Caco-2 (cell line): ENCODE measurements at regions of chr22 and their contacts with region 1.

Region 1: DNA sequence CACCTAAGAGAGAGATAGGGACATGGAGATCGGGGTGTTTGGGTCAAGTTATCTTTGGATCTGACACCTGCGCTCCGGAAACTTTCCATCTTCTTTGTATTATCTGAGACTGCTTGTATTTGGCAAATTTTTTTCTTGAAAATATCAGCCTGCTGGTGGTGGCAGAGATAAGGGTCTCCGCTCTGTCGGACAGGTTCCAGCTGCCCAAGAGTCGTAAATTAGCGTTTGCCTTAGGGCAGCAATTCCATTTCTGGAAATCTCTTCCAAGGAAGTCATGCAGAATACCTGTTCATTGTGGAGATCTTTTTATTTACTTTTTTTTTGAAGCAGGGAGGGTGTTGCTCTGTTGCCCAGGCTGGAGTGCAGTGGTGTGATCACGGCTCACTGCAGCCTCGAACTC is 19.5 kb upstream of the CSNK1E start:
- DNase-seq: peak in 1 of 2 experiments; percentile 30
- H3K4me3 ChIP-seq: peak overlapping the region; percentile 64
- H3K4me3 Mint-ChIP-seq: peak overlapping the region; percentile 63
- H3K27ac Mint-ChIP-seq: peak overlapping the region; percentile 49
- H3K4me1 ChIP-seq: peaks cover 9% of the 10 kb centered on the region
- H3K4me1 Mint-ChIP-seq: no peaks in the 10 kb centered on the region
- H3K27me3 ChIP-seq: no peaks in the 10 kb centered on the region
- H3K27me3 Mint-ChIP-seq: no peaks in the 10 kb centered on the region
- CTCF ChIP-seq: no peak

Region 2: DNA sequence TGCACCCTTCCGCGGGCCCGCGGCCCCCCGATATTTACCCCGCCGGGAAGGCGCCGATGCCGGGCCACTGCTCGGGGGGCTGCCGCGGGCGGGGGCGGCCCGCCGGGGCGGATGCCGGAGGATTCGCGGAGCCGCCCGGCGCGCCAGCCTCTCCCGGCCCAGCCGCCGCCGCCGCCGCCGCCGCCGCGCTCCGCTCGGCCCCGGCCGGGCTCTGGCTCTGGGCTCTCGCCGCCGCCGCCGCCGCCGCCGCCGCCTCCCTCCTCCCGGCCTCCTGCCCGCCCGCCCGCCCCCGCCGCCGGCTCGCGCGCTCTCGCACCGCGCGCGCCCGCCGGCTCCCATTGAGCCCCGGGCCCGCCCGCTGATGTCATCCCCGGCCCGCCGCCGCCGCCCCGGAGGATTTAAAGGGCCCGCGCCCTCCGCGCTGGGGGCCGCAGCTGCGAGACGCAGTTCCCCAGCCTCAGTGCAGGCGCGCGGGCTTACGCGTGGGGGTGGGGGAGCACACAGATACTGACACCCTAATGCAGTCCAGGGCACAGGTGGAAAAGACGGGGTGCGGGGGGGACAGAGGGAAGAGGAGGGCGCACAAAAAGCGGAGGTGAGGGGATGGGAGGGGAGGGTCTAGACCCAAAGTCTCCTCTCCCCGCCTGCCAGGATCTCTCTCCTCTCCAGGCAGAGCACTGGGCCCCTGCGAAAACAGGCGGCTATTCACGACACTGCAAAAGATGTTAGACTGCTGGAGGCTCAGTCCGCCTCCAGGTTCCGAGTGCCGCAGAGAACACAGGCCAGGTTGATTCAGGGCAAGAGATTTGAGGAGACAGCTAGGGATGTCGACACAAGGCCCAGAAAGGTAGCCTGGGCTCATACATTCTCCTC is 19.3 kb before region 1 on chr22 and contains the start of gene CSNK1E:
- CTCF ChIA-PET with region 1: no interaction called
- POLR2A ChIA-PET with region 1: interaction called, 5 read pairs
- intact Hi-C with region 1: loop called (anchors 2 kb)
- DNase-seq: peak; percentile 62 to 83
- H3K4me3 ChIP-seq: peak within 1 kb of the TSS; percentile 81
- H3K4me3 Mint-ChIP-seq: peak within 1 kb of the TSS; percentile 86
- H3K27ac Mint-ChIP-seq: peak within 1 kb of the TSS; percentile 93
- H3K4me1 ChIP-seq: peaks cover 13% of the 10 kb centered on the region
- H3K4me1 Mint-ChIP-seq: no peaks in the 10 kb centered on the region
- H3K27me3 ChIP-seq: no peaks in the 10 kb centered on the region
- H3K27me3 Mint-ChIP-seq: no peaks in the 10 kb centered on the region
- CTCF ChIP-seq: no peak
- total RNA-seq, gene CSNK1E: 129 and 139 TPM in 2 replicates

Region 3: DNA sequence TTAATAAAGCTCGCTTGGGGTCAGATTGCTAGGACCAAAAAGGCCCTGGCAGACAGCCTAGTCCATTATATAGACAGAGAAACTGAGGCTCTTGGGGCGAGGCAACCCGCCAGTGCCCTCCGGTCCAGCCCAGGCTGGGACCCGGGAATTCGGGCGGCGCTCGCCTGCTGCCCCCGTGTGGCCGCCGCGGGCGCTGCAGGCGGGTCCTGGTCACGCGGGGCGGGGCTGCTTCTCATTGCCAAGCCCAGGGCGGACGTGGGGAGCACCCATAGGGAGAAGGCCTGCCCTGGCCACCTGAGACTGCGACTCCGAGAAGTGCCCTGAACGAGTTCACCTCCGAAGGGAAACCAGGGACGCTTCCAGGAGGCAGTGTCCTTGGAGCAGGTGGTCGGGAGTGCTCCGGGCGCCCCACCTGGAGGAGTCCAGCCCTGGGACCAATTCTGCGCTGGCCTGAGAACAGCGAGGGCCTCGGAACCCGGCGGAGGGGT is 16.5 kb after region 1 on chr22:
- CTCF ChIA-PET with region 1: no interaction called
- POLR2A ChIA-PET with region 1: no interaction called
- intact Hi-C with region 1: loop called (anchors 2 kb)
- DNase-seq: peak in 1 of 2 experiments; percentile 83
- H3K4me3 ChIP-seq: no peak overlapping the region
- H3K4me3 Mint-ChIP-seq: no peak overlapping the region
- H3K27ac Mint-ChIP-seq: no peak overlapping the region
- H3K4me1 ChIP-seq: 0 out of 2 replicates have a peak, but pooled peaks cover 5% of the 10 kb centered on the region
- H3K4me1 Mint-ChIP-seq: no peaks in the 10 kb centered on the region
- H3K27me3 ChIP-seq: no peaks in the 10 kb centered on the region
- H3K27me3 Mint-ChIP-seq: no peaks in the 10 kb centered on the region
- CTCF ChIP-seq: peak; percentile 73 to 94